Gastrocnemius medialis (tissue), 4 donors: ENCODE measurements at regions of chr3 and their contacts with region 1.

Region 1: DNA sequence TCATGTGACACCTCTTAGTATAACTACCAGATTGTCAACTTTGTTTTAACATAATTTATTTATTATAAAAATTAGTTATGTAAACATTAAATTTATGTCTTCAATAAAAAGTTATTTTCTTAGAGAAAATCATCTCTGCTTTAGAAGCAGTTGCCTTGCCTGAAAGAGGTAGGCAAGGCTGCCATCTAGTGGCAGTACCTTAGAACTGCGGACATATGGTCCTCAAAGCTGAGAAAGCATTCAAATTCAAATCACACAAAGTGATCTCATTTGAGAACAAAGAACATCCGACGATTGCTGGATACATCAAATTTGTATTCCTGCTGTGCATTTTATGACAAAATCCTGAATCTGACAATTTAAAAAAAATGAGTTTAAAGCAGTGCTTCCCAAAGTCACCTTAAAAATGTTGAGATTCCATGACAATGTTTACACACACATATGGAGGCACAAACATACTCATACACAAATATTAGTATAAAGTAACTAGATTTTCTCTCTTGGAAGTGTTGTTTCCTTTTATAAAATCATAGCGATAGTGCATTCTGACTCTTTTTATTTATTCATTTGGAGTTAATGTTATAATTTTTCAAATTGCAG is 617.4 kb downstream of the CADM2 start:
- DNase-seq: peak in 1 of 2 donors; percentile 37
- ATAC-seq: peak in 1 of 2 donors; percentile 18
- H3K4me3 ChIP-seq: no peak overlapping the region
- H3K27ac ChIP-seq: no peak overlapping the region
- H3K4me1 ChIP-seq: no peaks in the 10 kb centered on the region
- H3K27me3 ChIP-seq: no peaks in the 10 kb centered on the region
- CTCF ChIP-seq: peak; percentile 62 to 89 (median 68)
- POLR2A ChIP-seq: no peak

Region 2: DNA sequence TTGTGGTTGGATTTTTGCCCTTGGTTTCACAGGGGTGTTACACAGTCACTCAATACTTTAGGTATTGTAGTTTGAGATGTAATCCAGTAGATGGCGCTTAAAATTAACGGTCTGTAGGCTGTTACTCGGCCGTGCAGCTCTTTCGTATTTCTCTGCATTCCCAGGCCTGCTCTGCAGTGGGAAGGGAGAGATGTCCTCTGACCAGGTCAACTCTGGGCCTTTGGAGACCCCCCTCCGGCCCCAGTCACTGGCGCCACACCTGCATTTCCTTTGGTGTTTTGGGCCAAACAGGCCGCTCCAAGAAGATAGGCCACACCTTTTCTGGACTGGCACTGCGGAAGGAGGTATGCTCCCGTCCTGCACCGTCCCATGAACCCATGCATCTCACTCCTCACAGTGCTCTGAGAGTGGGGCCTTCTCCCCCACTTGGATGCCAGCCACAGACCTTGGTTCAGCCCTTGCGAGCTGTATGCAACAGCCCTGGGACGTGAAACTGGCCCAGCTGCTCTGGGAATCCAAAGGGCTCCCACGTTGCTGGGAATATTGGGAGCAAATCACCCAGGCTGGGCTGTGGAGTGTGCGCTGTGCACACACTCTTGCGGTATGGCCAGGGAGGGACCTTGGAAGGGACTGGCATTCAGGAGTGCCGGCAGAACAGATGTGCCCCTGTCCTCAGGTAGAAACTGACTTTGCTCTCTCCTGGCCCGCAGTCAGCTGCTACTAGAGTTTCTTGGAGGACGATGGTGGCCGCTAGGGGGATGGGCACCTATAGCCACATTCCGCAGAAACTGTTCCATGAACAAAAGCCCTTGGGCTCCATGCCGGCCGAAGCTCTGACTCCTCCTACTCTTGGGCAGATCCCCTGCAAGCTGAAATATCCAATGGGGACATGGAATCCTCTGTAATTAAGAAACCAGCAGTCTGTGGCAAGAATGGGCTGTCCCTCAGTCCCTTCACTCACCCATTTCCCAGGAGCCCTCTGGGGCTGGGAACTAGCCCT is 1027.9 kb before region 1 on chr3:
- in situ Hi-C with region 1: loop called in 3 of 4 experiments (anchors 10 to 25 kb)
- intact Hi-C with region 1: loop called (anchors 5 kb)
- DNase-seq: peak in 1 of 2 donors; percentile 9
- ATAC-seq: peak; percentile 76 to 79
- H3K4me3 ChIP-seq: peak overlapping the region in 2 of 4 donors; percentile 29 to 34
- H3K27ac ChIP-seq: no peak overlapping the region
- H3K4me1 ChIP-seq: no peaks in the 10 kb centered on the region
- H3K27me3 ChIP-seq: no peaks in the 10 kb centered on the region
- CTCF ChIP-seq: peak; percentile 37 to 60 (median 49)
- POLR2A ChIP-seq: no peak

Region 3: DNA sequence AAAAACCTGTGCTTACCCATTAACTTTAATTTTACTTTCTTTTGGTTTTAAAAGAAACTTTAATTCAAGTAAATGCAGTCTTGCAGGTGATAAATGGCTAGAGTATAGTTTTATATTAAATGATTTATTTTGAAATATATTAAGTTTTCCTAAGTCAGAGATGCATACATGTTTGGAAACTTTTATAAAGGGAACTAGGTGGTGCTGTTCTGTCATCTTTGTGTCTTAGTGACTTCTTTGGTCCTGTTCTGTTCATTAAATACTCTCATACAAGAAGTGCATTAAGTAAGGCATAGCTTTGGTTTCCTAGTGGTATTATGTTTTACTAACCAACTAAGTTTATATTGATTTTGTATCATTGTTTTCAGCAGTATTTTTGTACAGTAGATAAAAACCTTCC is 601.8 kb before region 1 on chr3:
- in situ Hi-C with region 1: loop called in 1 of 4 experiments (anchors 10 kb)
- intact Hi-C with region 1: no loop called
- DNase-seq: no peak
- ATAC-seq: peak in 1 of 2 donors; percentile 56
- H3K4me3 ChIP-seq: no peak overlapping the region
- H3K27ac ChIP-seq: no peak overlapping the region
- H3K4me1 ChIP-seq: peaks cover 0 to 11% of the 10 kb centered on the region in 2 donors
- H3K27me3 ChIP-seq: no peaks in the 10 kb centered on the region
- CTCF ChIP-seq: peak in 2 of 5 experiments; percentile 11 to 33
- POLR2A ChIP-seq: no peak

Region 4: DNA sequence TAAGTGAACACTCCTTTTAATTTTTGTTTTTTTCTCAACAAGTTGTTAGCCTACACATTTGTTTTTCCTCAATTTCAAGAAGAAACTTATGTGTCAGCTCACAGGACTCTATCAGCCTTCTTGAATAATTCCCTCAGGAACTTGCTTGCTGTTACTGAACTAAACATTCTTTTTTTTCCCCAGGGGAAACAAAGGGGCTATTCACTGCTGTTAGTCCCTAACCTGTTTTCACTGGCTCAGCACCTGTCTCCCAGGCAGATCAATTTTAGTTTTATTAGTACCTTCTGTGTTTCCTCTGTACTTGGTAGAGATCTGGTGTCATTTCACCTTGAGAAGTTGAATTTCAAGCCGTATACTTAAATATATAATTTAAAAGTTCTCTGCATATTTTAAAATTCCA is 27.2 kb after region 1 on chr3:
- in situ Hi-C with region 1: no loop called
- intact Hi-C with region 1: loop called (anchors 1 kb)
- DNase-seq: no peak
- ATAC-seq: no peak
- H3K4me3 ChIP-seq: no peak overlapping the region
- H3K27ac ChIP-seq: no peak overlapping the region
- H3K4me1 ChIP-seq: no peaks in the 10 kb centered on the region
- H3K27me3 ChIP-seq: no peaks in the 10 kb centered on the region
- CTCF ChIP-seq: no peak
- POLR2A ChIP-seq: no peak